ENCODE measurements at regions of chr7 and their contacts with region 1.

Region 1: DNA sequence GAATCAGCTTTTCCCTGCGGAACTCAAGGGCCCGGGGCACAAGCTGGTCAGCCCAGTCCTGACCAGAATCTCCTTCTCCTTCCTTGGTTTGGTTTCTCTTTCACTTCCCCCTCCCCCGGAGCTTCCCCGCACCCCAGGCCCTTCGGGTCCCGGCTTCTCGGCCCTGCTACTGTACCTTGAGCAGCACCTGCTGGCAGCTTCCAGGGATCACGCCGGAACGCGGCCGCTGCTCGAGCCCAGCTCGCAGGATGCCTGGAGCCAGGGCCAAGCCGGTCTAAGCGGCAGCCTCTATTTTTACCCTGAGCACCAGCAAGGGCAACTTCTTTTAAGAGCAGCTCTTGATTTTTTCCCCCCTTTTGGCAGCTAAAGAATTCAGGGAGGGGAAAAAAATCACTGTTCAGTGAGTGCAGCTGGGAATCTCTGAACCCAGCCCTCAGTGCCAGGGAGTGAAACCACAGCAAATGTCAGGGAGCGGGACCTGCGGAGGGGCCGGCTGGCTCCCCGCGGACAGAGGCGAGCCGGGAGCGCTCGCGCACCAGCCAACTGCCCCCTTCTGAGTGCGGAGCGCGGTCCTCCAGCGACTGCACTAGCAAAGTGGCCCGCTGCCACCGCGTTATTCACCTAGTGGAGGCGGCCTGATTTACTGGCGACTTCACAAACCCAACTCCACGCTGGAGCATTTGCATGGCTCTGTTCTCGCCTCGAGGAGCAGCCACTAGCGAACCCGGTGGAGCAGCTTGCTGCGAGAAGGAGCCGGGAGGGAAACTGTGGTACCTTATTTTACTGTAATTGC is 2.4 kb upstream of the INHBA start:
- DNase-seq: peak; percentile 81 to 91 (median 86)
- H3K4me3 ChIP-seq: peak overlapping the region; percentile 58
- H3K27ac ChIP-seq: peak overlapping the region; percentile 31 to 84
- H3K4me1 ChIP-seq: peaks cover 3% of the 10 kb centered on the region
- H3K27me3 ChIP-seq: no peaks in the 10 kb centered on the region
- CTCF ChIP-seq: peak; percentile 28 to 56 (median 46)
- EP300 ChIP-seq: no peak
- POLR2A ChIP-seq: no peak

Region 2: GRCh38 chr7:40329601-40330153 is 1375.6 kb before region 1 on chr7:
- intact Hi-C with region 1: loop called in 1 of 4 experiments (anchors 10 kb)
- DNase-seq: no peak
- H3K4me3 ChIP-seq: no peak overlapping the region
- H3K27ac ChIP-seq: no peak overlapping the region
- H3K4me1 ChIP-seq: no peaks in the 10 kb centered on the region
- H3K27me3 ChIP-seq: no peaks in the 10 kb centered on the region
- CTCF ChIP-seq: peak; percentile 34 to 54 (median 51)
- EP300 ChIP-seq: no peak
- POLR2A ChIP-seq: no peak

Measured in ovary (tissue), 10 donors.